GM10248 (cell line): ENCODE measurements at regions of chr4 and their contacts with region 1.

Region 1: GRCh38 chr4:71229477-71230270 is 109.1 kb upstream of the SLC4A4 start:
- DNase-seq: peak; percentile 39
- CTCF ChIP-seq: peak; percentile 55

Region 2: DNA sequence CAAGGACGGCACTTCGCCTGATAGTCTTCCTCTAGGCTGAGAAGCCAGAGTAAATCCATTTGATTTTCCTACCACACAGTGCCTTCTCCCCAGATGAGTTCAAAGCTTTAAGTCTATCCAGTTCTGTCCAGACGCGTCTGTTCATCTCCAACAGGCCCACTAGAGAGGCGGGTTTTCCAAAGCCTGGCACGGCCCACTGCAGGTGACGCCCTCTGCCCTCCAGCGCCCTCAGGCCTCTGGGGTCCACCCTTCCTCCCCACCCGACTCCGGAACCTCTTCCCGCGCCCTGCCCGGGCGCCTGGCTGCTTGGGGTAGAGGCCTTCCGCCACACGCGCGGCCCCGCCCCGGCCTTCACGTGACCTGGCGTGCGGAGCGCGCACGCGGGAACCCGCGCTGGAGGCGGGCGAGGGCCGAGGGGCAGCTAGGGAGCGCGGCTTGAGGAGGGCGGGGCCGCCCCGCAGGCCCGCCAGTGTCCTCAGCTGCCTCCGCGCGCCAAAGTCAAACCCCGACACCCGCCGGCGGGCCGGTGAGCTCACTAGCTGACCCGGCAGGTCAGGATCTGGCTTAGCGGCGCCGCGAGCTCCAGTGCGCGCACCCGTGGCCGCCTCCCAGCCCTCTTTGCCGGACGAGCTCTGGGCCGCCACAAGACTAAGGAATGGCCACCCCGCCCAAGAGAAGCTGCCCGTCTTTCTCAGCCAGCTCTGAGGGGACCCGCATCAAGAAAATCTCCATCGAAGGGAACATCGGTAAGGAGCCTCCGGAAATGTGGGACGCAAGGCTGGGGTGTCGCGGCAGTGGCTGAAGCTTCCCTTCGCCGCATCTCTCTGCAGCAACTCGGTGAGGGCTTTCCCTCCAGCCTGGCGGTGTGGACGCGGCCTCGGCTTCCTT is 236.2 kb before region 1 on chr4 and contains the start of gene DCK:
- CTCF ChIA-PET with region 1: no interaction called
- POLR2A ChIA-PET with region 1: no interaction called
- DNase-seq: peak; percentile 94
- CTCF ChIP-seq: no peak

Region 3: GRCh38 chr4:71167075-71167474 is 62.6 kb before region 1 on chr4:
- CTCF ChIA-PET with region 1: no interaction called
- POLR2A ChIA-PET with region 1: no interaction called
- DNase-seq: no peak
- CTCF ChIP-seq: no peak

Region 4: DNA sequence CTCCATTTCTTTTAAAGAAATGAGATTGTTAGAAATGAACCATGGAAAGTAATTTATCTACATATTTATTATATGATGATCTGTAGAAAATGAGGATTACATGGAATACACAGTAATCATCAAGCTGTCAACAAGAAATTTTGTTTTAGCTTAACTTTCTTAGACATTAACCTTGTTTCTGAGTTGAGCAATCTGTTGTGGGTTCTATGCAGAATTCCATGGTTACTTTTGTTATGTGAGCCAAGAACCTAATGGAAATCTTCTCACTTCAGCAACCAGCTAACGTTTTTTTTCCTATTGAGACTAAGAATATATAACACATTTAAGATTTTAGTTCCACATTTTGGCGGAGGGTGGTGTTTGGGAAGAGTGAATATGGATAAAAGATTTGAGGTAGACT is 27.0 kb before region 1 on chr4:
- CTCF ChIA-PET with region 1: no interaction called
- POLR2A ChIA-PET with region 1: no interaction called
- DNase-seq: no peak
- CTCF ChIP-seq: no peak

Region 5: GRCh38 chr4:71217688-71218087 is 12.0 kb before region 1 on chr4:
- CTCF ChIA-PET with region 1: interaction called, 18 read pairs
- POLR2A ChIA-PET with region 1: no interaction called
- DNase-seq: no peak
- CTCF ChIP-seq: no peak

Region 6: DNA sequence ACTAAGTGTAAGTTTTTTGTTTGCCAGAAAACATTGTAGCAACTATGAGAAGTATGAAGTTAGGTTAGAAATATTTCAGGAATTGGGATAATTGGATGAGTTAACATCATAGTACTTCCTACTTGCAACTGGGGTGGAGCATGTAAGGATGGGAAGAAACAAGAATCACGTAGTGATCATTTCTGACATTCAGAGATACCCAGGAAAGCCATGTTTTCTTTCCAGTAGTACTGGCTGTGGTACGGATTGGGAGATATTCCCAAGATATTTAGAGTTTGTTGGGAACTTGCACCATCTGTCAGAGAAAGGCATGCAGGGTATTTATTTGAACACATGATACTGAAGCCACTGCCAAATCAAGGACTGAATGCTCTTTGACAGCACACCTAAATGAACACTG is 21.6 kb after region 1 on chr4:
- CTCF ChIA-PET with region 1: interaction called, 10 read pairs
- POLR2A ChIA-PET with region 1: no interaction called
- DNase-seq: no peak
- CTCF ChIP-seq: no peak